Panc1 (cell line): ENCODE measurements at regions of chr2 and their contacts with region 1.

Region 1: GRCh38 chr2:164495491-164496223 is 125.6 kb downstream of the GRB14 start:
- DNase-seq: peak; percentile 33
- ATAC-seq: 0 out of 2 replicates have a peak, but pooled peaks have one; percentile 70
- H3K4me3 ChIP-seq: no peak overlapping the region
- H3K27ac ChIP-seq: no peak overlapping the region; the same call in 1 of the 2 replicates
- H3K4me1 ChIP-seq: no peaks in the 10 kb centered on the region
- H3K27me3 ChIP-seq: no peaks in the 10 kb centered on the region
- CTCF ChIP-seq: peak; percentile 77

Region 2: GRCh38 chr2:162890690-162891311 is 1604.9 kb before region 1 on chr2:
- CTCF ChIA-PET with region 1: no interaction called
- POLR2A ChIA-PET with region 1: no interaction called
- in situ Hi-C with region 1: no loop called
- intact Hi-C with region 1: loop called (anchors 10 kb)
- DNase-seq: peak; percentile 47
- ATAC-seq: peak; percentile 90
- H3K4me3 ChIP-seq: no peak overlapping the region
- H3K27ac ChIP-seq: no peak overlapping the region
- H3K4me1 ChIP-seq: no peaks in the 10 kb centered on the region
- H3K27me3 ChIP-seq: no peaks in the 10 kb centered on the region
- CTCF ChIP-seq: peak; percentile 82

Region 3: GRCh38 chr2:163155279-163155883 is 1340.3 kb before region 1 on chr2:
- CTCF ChIA-PET with region 1: no interaction called
- POLR2A ChIA-PET with region 1: no interaction called
- in situ Hi-C with region 1: no loop called
- intact Hi-C with region 1: loop called (anchors 10 kb)
- DNase-seq: no peak
- ATAC-seq: no peak
- H3K4me3 ChIP-seq: no peak overlapping the region
- H3K27ac ChIP-seq: no peak overlapping the region
- H3K4me1 ChIP-seq: no peaks in the 10 kb centered on the region
- H3K27me3 ChIP-seq: no peaks in the 10 kb centered on the region
- CTCF ChIP-seq: peak; percentile 67; the same call in 1 of the 2 replicates